MCF 10A (cell line): ENCODE measurements at regions of chr1 and their contacts with region 1.

Region 1: DNA sequence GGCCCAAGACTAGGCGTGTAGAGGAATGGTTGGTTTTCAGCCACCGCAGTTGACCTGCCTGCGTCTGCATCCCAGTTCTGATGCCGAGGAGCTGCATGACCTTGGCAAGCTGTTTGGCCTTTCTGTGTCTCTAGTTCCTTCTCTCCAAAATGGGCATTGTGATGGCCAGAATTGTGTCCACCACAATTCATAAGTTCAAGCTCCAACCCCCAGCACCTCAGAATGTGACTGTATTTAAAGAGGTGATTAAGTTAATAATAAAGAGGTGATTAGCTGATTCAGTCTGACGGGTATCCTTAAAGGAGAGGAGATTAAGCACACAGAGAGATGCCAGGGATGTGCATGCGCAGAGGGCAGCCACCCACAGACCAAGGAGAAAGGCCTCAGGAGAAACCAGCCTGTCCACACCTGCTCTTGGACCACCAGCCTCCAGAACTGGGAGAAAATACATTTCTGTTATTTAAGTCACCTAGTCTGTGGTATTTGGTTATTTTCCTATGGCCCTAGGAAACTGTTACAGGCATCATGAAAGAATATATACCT is 28.5 kb downstream of the MAB21L3 start:
- DNase-seq: no peak
- H3K4me3 Mint-ChIP-seq: no peak overlapping the region
- H3K27ac Mint-ChIP-seq: no peak overlapping the region
- H3K4me1 Mint-ChIP-seq: no peaks in the 10 kb centered on the region
- H3K27me3 Mint-ChIP-seq: no peaks in the 10 kb centered on the region
- CTCF ChIP-seq: no peak

Region 2: DNA sequence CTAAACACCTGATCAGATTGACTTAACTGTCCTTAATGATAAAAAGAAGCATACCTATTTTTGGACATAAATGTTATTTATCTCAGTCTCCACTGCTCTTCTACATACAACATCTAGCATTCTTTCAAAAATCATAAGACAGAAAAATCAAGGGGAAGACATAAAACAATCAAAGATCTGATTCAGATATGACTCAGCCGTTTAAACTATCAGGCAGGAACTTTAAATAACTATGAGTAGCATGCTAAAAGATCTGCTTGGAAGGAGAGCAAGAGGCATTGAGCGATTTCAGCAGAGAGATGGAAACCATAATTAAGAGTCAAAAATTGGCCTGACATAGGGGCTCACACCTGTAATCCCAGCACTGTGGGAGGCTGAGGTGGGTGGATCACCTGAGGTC is 190.5 kb before region 1 on chr1:
- CTCF ChIA-PET with region 1: no interaction called
- POLR2A ChIA-PET with region 1: no interaction called
- intact Hi-C with region 1: no loop called
- DNase-seq: peak; percentile 14
- H3K4me3 Mint-ChIP-seq: no peak overlapping the region
- H3K27ac Mint-ChIP-seq: no peak overlapping the region
- H3K4me1 Mint-ChIP-seq: peaks cover 6% of the 10 kb centered on the region
- H3K27me3 Mint-ChIP-seq: no peaks in the 10 kb centered on the region
- CTCF ChIP-seq: no peak

Region 3: DNA sequence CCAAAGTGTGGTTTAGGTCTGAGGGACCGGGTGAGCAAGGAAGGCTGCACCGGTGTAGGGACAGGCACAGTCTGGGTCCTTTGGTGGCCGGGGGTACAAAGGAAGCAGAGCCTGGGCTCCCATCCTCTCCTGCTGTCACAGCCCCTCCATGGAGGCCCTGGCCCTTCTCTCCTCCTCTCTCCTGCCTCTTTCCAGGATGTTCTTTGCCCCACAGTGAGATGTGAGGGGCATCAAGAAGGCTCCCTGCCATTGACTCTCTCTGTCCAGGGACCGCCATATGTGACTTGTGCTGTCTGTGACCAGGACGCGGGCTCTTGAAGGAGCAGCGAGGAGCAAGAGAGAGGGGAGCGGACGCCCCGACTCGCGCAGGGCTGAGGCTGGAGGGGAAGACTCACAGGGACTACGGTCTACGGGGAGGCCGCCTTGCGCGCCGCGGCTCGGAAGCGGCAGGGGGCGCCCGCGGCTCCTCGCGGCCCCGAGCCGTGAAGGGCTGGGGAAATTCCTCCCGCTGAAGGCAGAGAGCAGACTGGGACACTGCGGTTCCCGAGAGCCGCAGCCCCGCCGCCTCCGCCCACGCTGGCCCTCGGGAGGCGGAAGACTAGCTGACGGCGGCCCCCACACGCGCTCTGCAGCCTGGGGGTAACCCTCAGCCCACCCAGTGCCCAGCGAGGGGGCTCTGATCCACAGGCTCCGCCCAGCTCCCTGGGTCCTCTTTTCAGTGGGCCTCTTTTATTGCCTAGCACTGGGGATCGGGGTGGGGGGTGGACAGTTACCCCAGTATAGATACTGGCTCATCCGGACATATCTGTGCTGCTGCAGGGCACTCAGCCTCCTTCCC is 12.3 kb after region 1 on chr1:
- CTCF ChIA-PET with region 1: interaction called, 54 read pairs
- POLR2A ChIA-PET with region 1: interaction called, 4 read pairs
- intact Hi-C with region 1: no loop called
- DNase-seq: peak; percentile 72
- H3K4me3 Mint-ChIP-seq: peak overlapping the region; percentile 20
- H3K27ac Mint-ChIP-seq: no peak overlapping the region
- H3K4me1 Mint-ChIP-seq: peaks cover 4% of the 10 kb centered on the region
- H3K27me3 Mint-ChIP-seq: peaks cover 12% of the 10 kb centered on the region
- CTCF ChIP-seq: peak; percentile 90

Region 4: DNA sequence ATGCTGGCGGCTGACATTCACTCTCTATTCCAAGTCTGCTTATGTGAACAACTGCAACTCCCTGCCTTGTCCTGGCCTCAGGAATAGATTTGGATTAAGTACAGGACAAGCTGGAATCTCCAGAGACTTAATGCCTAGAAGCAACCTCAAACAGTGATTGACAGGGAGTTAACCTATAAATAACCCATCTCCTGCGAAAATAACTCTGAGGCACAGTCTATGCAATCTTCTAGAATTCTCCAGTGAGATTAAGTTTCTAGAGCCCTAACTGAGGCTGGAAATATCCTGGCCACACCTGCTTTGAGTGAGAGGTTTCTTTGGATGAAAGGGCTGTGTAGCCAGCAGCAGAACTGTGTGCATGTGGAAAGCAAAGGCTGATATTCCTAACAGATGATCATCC is 208.0 kb after region 1 on chr1:
- CTCF ChIA-PET with region 1: no interaction called
- POLR2A ChIA-PET with region 1: no interaction called
- intact Hi-C with region 1: no loop called
- DNase-seq: no peak
- H3K4me3 Mint-ChIP-seq: no peak overlapping the region
- H3K27ac Mint-ChIP-seq: peak overlapping the region; percentile 21
- H3K4me1 Mint-ChIP-seq: peaks cover 10% of the 10 kb centered on the region
- H3K27me3 Mint-ChIP-seq: no peaks in the 10 kb centered on the region
- CTCF ChIP-seq: no peak

Region 5: DNA sequence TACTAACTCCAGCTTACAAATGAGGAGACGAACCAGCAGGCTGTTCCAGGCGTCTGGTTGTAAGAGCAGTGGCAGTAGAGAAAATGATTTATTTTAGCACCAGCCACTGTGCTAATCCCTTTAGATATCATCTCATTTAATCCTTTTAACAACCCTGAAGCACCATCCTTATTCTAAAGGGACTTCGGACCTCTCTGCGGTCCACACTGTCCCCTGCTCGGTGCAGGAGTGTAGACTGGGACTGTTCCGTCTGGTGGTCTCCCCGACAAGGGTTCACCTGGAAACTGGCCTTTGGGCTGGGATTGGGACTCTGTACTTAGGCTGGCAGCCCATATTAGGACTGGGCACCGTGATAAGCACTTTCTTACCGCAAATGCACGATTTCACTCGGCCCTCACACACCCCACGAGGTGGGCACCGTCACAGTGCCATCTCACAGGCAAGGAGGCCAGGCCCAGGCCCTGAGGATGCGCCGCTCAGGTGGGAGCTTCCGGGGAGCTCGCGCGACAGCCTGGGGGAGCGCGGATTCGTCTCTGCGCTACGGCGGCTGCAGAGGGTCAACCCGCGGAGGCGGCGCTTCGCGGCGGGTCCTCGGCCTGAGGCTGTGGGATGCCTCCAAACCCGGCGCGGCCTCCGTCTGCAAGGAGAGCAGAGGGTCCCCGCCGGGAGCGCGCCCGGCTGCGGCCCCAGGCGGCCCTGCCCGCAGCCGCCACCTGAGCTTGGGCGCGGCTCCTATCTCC is 278.6 kb after region 1 on chr1:
- CTCF ChIA-PET with region 1: interaction called, 13 read pairs
- POLR2A ChIA-PET with region 1: interaction called, 3 read pairs
- intact Hi-C with region 1: no loop called
- DNase-seq: peak; percentile 70
- H3K4me3 Mint-ChIP-seq: peak overlapping the region; percentile 85
- H3K27ac Mint-ChIP-seq: peak overlapping the region; percentile 50
- H3K4me1 Mint-ChIP-seq: peaks cover 6% of the 10 kb centered on the region
- H3K27me3 Mint-ChIP-seq: no peaks in the 10 kb centered on the region
- CTCF ChIP-seq: no peak

Region 6: DNA sequence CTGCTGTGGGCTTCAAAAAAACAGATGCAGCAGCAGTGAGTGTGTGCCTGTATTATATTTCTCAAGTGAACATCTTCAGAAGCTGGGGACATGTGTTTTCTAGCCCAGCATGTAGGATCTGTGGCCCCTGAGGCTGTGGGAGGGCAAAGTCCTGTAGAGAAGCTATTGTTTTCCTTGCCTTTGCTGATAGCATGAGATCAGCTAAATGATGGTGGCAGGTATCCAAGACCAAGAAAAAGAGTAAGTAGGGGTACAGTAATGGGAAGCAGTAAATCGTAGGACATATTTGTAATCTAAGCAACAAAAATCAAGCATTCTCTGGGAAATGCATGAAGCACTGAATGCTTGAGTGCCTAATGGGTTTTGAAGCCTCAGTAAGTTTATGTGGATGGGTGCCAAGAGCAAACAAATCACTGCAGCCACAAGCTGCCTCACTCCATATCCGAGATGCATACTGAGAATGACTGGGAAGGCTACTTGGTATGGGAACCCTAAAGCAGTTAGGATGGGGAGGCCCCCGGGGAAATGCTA is 332.8 kb after region 1 on chr1:
- CTCF ChIA-PET with region 1: interaction called, 14 read pairs
- POLR2A ChIA-PET with region 1: no interaction called
- intact Hi-C with region 1: no loop called
- DNase-seq: no peak
- H3K4me3 Mint-ChIP-seq: no peak overlapping the region
- H3K27ac Mint-ChIP-seq: no peak overlapping the region
- H3K4me1 Mint-ChIP-seq: no peaks in the 10 kb centered on the region
- H3K27me3 Mint-ChIP-seq: no peaks in the 10 kb centered on the region
- CTCF ChIP-seq: no peak

Region 7: DNA sequence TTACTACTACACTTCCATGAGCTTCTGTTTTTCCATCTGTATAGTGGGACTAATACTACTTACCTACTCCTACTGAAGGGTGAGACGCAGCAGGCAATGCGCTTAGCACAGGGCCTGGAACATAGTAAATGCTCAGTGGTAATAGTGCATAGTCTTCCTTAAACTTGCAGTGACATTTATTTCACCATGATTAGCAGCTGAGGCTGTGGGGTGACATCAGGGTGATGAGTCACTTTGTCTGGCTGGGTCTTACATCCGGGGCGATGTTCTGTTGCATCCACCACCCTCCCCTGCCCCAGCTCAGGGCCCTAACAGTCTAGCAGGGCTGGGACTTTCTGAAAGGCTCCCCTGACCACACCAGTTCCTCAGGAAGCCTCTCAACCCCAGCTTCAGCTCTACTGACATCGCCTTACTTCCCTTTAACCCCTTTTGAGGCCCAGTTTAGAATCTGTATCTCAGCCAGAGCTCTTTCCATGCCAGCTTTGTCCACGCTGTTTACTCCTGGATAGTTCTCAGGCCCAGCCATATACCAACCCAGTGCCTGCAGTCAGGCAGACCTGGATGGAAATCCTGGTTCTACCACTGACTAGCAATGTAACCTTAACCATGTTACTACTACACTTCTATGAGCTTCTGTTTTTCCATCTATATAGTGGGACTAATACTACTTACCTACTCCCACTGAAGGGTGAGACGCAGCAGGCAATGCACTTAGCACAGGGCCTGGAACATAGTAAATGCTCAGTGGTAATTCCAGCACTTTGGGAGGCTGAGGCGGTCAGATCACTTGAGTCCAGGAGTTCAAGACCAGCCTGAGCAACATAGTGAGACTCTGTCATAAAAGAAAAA is 364.9 kb after region 1 on chr1:
- CTCF ChIA-PET with region 1: interaction called, 222 read pairs
- POLR2A ChIA-PET with region 1: interaction called, 8 read pairs
- intact Hi-C with region 1: loop called (anchors 1 kb)
- DNase-seq: peak; percentile 62
- H3K4me3 Mint-ChIP-seq: no peak overlapping the region
- H3K27ac Mint-ChIP-seq: peak overlapping the region; percentile 73
- H3K4me1 Mint-ChIP-seq: peaks cover 27% of the 10 kb centered on the region
- H3K27me3 Mint-ChIP-seq: no peaks in the 10 kb centered on the region
- CTCF ChIP-seq: no peak